Mammary epithelial cell (primary cell): ENCODE measurements at regions of chr6 and their contacts with region 1.

Region 1: GRCh38 chr6:97705568-97705967 is 422.6 kb upstream of the MMS22L start:
- DNase-seq: no peak
- H3K4me3 ChIP-seq: no peak overlapping the region
- H3K27ac ChIP-seq: no peak overlapping the region
- H3K4me1 ChIP-seq: no peaks in the 10 kb centered on the region
- H3K27me3 ChIP-seq: no peaks in the 10 kb centered on the region
- CTCF ChIP-seq: peak; percentile 17 to 40

Region 2: GRCh38 chr6:97765480-97765879 is 59.9 kb after region 1 on chr6:
- CTCF ChIA-PET with region 1: no interaction called
- dilution Hi-C with region 1: no loop called
- in situ Hi-C with region 1: no loop called
- intact Hi-C with region 1: no loop called
- DNase-seq: no peak
- H3K4me3 ChIP-seq: no peak overlapping the region
- H3K27ac ChIP-seq: no peak overlapping the region
- H3K4me1 ChIP-seq: no peaks in the 10 kb centered on the region
- H3K27me3 ChIP-seq: no peaks in the 10 kb centered on the region
- CTCF ChIP-seq: no peak

Region 3: GRCh38 chr6:97925504-97925903 is 219.9 kb after region 1 on chr6:
- CTCF ChIA-PET with region 1: interaction called, 5 read pairs
- dilution Hi-C with region 1: no loop called
- in situ Hi-C with region 1: no loop called
- intact Hi-C with region 1: loop called (anchors 10 kb)
- DNase-seq: no peak
- H3K4me3 ChIP-seq: no peak overlapping the region
- H3K27ac ChIP-seq: no peak overlapping the region
- H3K4me1 ChIP-seq: no peaks in the 10 kb centered on the region
- H3K27me3 ChIP-seq: peaks cover 5% of the 10 kb centered on the region
- CTCF ChIP-seq: peak; percentile 3 to 37

Region 4: GRCh38 chr6:97978855-97979271 is 273.3 kb after region 1 on chr6:
- CTCF ChIA-PET with region 1: no interaction called
- dilution Hi-C with region 1: no loop called
- in situ Hi-C with region 1: no loop called
- intact Hi-C with region 1: loop called (anchors 5 kb)
- DNase-seq: no peak
- H3K4me3 ChIP-seq: no peak overlapping the region
- H3K27ac ChIP-seq: no peak overlapping the region
- H3K4me1 ChIP-seq: no peaks in the 10 kb centered on the region
- H3K27me3 ChIP-seq: peaks cover 2% of the 10 kb centered on the region
- CTCF ChIP-seq: peak in 1 of 2 donors; percentile 15

Region 5: DNA sequence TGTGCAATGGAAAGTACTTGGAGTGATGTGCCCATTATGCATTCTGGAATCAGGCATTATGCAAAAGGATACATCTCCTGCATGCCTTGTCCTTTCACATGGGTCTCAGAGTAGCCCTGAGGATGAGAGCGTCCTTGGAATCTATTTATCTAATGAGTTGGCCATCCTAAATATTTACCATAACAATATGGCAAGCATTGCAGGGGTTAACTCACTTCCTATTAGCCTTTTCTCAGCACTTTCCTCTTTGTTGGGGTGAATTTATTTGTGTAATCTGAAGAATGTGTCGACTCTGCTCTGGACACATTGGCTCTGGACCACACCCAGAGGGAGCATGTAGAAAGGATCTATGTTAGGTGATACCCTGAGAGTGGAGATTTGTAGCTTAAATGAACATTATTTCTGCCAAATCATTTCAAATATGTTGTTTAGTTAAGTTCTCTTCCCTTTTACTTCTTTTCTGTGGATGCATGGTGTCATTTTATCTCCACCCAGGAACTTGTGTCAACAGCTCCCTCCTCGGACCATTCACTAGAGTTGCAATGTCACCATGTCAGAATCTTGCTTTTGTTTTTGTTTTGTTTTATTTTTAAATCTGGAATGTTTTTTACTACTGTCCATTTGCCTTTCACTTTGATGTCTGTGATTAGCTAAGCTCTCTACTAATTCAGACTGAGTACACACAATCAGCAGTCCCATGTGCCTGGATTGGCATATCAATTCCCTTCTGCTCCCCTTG is 334.5 kb after region 1 on chr6:
- CTCF ChIA-PET with region 1: no interaction called
- dilution Hi-C with region 1: no loop called
- in situ Hi-C with region 1: no loop called
- intact Hi-C with region 1: loop called (anchors 1 kb)
- DNase-seq: peak; percentile 17
- H3K4me3 ChIP-seq: no peak overlapping the region
- H3K27ac ChIP-seq: no peak overlapping the region
- H3K4me1 ChIP-seq: no peaks in the 10 kb centered on the region
- H3K27me3 ChIP-seq: peaks cover 6% of the 10 kb centered on the region
- CTCF ChIP-seq: peak; percentile 21 to 49